Spleen (tissue), 13 donors: ENCODE measurements at regions of chr6 and their contacts with region 1.

Region 1: GRCh38 chr6:32868257-32868788 is 14.3 kb downstream of the PSMB9 start:
- DNase-seq: peak; percentile 90
- H3K4me3 ChIP-seq: peak overlapping the region in 1 of 8 donors; percentile 30
- H3K27ac ChIP-seq: peak overlapping the region in 4 of 8 donors; percentile 59 to 73 (median 73)
- H3K4me1 ChIP-seq: peaks cover 11 to 35% (median 32%) of the 10 kb centered on the region in 6 donors
- H3K27me3 ChIP-seq: no peaks in the 10 kb centered on the region
- CTCF ChIP-seq: peak; percentile 75 to 96 (median 93)
- POLR2A ChIP-seq: no peak

Region 2: DNA sequence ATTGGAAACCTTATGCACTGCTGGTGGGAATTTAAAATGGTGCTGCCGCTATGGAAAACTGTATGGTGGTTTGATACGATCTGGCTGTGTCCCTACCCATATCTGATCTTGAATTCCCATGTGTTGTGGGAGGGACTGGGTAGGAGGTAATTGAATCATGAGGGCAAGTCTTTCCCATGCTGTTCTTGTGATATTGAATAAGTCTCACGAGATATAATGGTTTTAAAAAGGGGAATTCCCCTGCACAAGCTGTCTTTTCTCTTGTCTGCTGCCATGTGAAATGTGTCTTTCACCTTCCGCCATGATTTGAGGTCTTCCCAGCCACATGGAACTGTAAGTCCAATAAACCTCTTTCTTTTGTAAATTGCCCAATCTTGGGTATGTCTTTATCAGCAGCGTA is 34.7 kb before region 1 on chr6:
- intact Hi-C with region 1: loop called (anchors 5 kb)
- DNase-seq: no peak
- H3K4me3 ChIP-seq: no peak overlapping the region
- H3K27ac ChIP-seq: no peak overlapping the region
- H3K4me1 ChIP-seq: peaks cover 17 to 64% (median 32%) of the 10 kb centered on the region in 6 donors
- H3K27me3 ChIP-seq: no peaks in the 10 kb centered on the region
- CTCF ChIP-seq: no peak
- POLR2A ChIP-seq: no peak

Region 3: GRCh38 chr6:33073431-33073871 is 205.1 kb after region 1 on chr6 and contains the start of gene HLA-DPA1:
- intact Hi-C with region 1: no loop called
- DNase-seq: peak; percentile 81
- H3K4me3 ChIP-seq: peak within 1 kb of the TSS; percentile 27 to 76 (median 54)
- H3K27ac ChIP-seq: peak within 1 kb of the TSS; percentile 89 to 97 (median 94)
- H3K4me1 ChIP-seq: peaks cover 18 to 95% (median 76%) of the 10 kb centered on the region in 6 donors
- H3K27me3 ChIP-seq: no peaks in the 10 kb centered on the region
- CTCF ChIP-seq: no peak
- POLR2A ChIP-seq: peak; percentile 81 to 99 (median 97)
- total RNA-seq, gene HLA-DPA1: 253 to 621 (median 517) TPM